ENCODE measurements at regions of chr18 and their contacts with region 1.

Region 1: DNA sequence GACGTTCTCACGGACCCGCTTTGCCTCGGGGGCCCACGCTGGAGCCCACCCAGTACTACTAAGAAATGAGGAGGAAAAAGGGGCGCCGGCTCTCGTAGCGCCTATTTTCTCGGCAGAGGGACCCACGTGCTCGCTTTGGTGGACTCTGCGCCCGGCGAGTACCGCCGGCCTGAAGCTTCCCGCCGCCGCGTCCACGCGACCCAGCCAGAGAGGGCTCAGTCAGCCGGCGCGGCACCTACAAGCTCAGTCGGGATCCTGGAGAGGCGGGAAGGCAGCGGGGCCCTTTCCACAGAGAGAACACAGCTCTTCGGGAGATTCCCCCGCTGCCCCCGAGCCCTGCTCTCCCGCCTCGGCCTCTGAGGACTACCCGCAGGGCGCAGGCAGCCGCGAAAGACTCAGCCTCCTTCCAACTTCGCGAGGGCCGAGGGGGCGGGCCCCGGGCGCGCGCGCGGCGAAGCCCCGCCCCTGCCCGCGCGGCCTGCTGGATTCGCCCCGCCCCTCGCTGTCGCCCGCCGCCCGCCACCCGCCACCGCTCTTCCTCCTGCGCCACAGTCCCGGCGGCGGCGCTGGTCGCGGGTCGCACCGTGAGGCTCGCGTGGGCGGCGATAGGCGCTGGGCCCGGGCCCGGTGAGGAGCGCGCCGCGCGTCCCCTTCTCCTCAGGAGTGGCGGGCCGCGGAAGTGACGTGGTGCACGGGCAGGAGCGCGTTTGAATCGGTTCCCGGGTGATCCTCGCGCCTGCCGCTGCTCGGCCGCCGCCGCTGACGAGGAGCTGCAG is at the start of gene SMCHD1:
- DNase-seq: peak; percentile 67 to 96 (median 87)
- ATAC-seq: peak; percentile 70
- H3K4me3 ChIP-seq: peak within 1 kb of the TSS; percentile 96 to 97
- H3K4me3 Mint-ChIP-seq: peak within 1 kb of the TSS; percentile 88
- H3K27ac ChIP-seq: peak within 1 kb of the TSS; percentile 97 to 100
- H3K27ac Mint-ChIP-seq: peak within 1 kb of the TSS; percentile 98
- H3K4me1 ChIP-seq: peaks cover 29% of the 10 kb centered on the region
- H3K4me1 Mint-ChIP-seq: peaks cover 48% of the 10 kb centered on the region
- H3K27me3 ChIP-seq: no peaks in the 10 kb centered on the region
- H3K27me3 Mint-ChIP-seq: no peaks in the 10 kb centered on the region
- CTCF ChIP-seq: no peak
- total RNA-seq, gene SMCHD1: 305 to 306 TPM

Region 2: DNA sequence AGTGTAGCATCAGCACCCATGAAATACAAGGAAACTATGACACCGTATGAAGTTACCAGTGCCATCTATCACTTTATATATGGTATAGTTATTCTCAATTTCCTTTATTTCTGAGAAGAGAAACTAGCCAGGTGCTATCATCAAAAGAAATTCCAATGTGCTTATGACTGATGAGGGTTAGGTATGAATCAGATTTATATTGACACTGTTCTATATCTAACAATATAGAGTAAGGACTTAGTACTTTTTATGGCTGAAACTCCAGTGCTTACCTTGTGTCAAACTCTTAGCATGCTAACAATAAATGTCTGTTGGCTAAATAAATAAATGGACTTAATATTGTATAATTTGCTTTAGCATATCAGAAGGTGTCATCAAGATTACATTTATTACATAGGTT is 91.0 kb before region 1 on chr18:
- CTCF ChIA-PET with region 1: interaction called, 3 read pairs
- POLR2A ChIA-PET with region 1: interaction called, 10 read pairs
- intact Hi-C with region 1: no loop called
- DNase-seq: no peak
- ATAC-seq: no peak
- H3K4me3 ChIP-seq: no peak overlapping the region
- H3K4me3 Mint-ChIP-seq: no peak overlapping the region
- H3K27ac ChIP-seq: no peak overlapping the region
- H3K27ac Mint-ChIP-seq: no peak overlapping the region
- H3K4me1 ChIP-seq: peaks cover 10% of the 10 kb centered on the region
- H3K4me1 Mint-ChIP-seq: peaks cover 26% of the 10 kb centered on the region
- H3K27me3 ChIP-seq: no peaks in the 10 kb centered on the region
- H3K27me3 Mint-ChIP-seq: no peaks in the 10 kb centered on the region
- CTCF ChIP-seq: no peak

Region 3: DNA sequence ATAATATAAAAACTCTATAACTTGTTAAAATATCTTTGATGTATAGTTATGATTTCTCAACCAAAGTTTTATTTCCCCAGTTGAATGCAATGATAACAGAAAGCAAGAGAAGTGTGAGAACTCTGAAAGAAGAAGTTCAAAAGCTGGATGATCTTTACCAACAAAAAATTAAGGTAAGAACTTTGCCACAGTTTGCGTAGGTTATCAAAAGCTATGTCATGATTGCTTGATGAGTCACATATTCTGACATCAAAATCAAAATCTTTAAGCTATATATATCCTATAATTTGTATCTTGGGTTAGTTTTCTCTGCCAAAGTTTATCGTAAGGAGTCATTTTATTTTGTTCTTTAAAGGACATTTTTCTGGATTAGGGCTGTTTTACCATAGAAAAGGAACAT is 49.0 kb before region 1 on chr18:
- CTCF ChIA-PET with region 1: interaction called, 3 read pairs
- POLR2A ChIA-PET with region 1: interaction called, 41 read pairs
- intact Hi-C with region 1: loop called (anchors 1 to 5 kb)
- DNase-seq: peak in 2 of 9 experiments; percentile 38 to 70
- ATAC-seq: peak; percentile 56
- H3K4me3 ChIP-seq: no peak overlapping the region
- H3K4me3 Mint-ChIP-seq: peak overlapping the region; percentile 43
- H3K27ac ChIP-seq: peak overlapping the region; percentile 19 to 74
- H3K27ac Mint-ChIP-seq: peak overlapping the region; percentile 85
- H3K4me1 ChIP-seq: peaks cover 33% of the 10 kb centered on the region
- H3K4me1 Mint-ChIP-seq: peaks cover 54% of the 10 kb centered on the region
- H3K27me3 ChIP-seq: no peaks in the 10 kb centered on the region
- H3K27me3 Mint-ChIP-seq: no peaks in the 10 kb centered on the region
- CTCF ChIP-seq: no peak

Region 4: DNA sequence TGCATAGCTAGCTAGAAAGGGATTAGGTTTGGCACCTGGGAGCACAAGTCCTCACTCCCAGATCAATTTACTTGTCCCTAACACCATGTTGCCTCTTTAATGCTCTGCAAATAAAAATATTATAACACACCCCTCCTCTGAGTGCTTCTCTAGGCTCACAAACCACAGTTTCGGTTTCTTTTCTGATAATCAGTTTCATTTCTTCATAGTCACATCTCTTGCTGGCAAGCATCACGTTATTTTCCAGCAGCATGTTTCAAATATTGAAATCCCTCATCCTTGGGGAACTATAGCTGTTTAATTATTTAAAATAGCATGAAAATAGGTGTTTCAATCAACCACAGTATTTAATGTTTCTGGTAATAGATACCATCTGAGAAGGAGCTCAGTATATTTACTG is 13.7 kb before region 1 on chr18:
- CTCF ChIA-PET with region 1: interaction called, 20 read pairs
- POLR2A ChIA-PET with region 1: interaction called, 232 read pairs
- intact Hi-C with region 1: loop called (anchors 1 kb)
- DNase-seq: peak in 2 of 9 experiments; percentile 62 to 83
- ATAC-seq: peak; percentile 31
- H3K4me3 ChIP-seq: peak overlapping the region; percentile 22 to 29
- H3K4me3 Mint-ChIP-seq: peak overlapping the region; percentile 79
- H3K27ac ChIP-seq: peak overlapping the region; percentile 40 to 92
- H3K27ac Mint-ChIP-seq: peak overlapping the region; percentile 95
- H3K4me1 ChIP-seq: peaks cover 72% of the 10 kb centered on the region
- H3K4me1 Mint-ChIP-seq: peaks cover 48% of the 10 kb centered on the region
- H3K27me3 ChIP-seq: no peaks in the 10 kb centered on the region
- H3K27me3 Mint-ChIP-seq: no peaks in the 10 kb centered on the region
- CTCF ChIP-seq: no peak

Region 5: GRCh38 chr18:2687390-2688001 is 32.1 kb after region 1 on chr18:
- CTCF ChIA-PET with region 1: no interaction called
- POLR2A ChIA-PET with region 1: interaction called, 12 read pairs
- intact Hi-C with region 1: no loop called
- DNase-seq: no peak
- ATAC-seq: no peak
- H3K4me3 ChIP-seq: no peak overlapping the region
- H3K4me3 Mint-ChIP-seq: peak overlapping the region; percentile 38
- H3K27ac ChIP-seq: peak overlapping the region in 1 of 2 experiments; percentile 26
- H3K27ac Mint-ChIP-seq: peak overlapping the region; percentile 23
- H3K4me1 ChIP-seq: peaks cover 27% of the 10 kb centered on the region
- H3K4me1 Mint-ChIP-seq: peaks cover 64% of the 10 kb centered on the region
- H3K27me3 ChIP-seq: no peaks in the 10 kb centered on the region
- H3K27me3 Mint-ChIP-seq: no peaks in the 10 kb centered on the region
- CTCF ChIP-seq: no peak

Region 6: GRCh38 chr18:2758309-2758708 is 102.9 kb after region 1 on chr18:
- CTCF ChIA-PET with region 1: no interaction called
- POLR2A ChIA-PET with region 1: no interaction called
- intact Hi-C with region 1: no loop called
- DNase-seq: no peak
- ATAC-seq: no peak
- H3K4me3 ChIP-seq: no peak overlapping the region
- H3K4me3 Mint-ChIP-seq: no peak overlapping the region
- H3K27ac ChIP-seq: no peak overlapping the region
- H3K27ac Mint-ChIP-seq: peak overlapping the region; percentile 37
- H3K4me1 ChIP-seq: no peaks in the 10 kb centered on the region
- H3K4me1 Mint-ChIP-seq: peaks cover 26% of the 10 kb centered on the region
- H3K27me3 ChIP-seq: no peaks in the 10 kb centered on the region
- H3K27me3 Mint-ChIP-seq: no peaks in the 10 kb centered on the region
- CTCF ChIP-seq: no peak

Region 7: DNA sequence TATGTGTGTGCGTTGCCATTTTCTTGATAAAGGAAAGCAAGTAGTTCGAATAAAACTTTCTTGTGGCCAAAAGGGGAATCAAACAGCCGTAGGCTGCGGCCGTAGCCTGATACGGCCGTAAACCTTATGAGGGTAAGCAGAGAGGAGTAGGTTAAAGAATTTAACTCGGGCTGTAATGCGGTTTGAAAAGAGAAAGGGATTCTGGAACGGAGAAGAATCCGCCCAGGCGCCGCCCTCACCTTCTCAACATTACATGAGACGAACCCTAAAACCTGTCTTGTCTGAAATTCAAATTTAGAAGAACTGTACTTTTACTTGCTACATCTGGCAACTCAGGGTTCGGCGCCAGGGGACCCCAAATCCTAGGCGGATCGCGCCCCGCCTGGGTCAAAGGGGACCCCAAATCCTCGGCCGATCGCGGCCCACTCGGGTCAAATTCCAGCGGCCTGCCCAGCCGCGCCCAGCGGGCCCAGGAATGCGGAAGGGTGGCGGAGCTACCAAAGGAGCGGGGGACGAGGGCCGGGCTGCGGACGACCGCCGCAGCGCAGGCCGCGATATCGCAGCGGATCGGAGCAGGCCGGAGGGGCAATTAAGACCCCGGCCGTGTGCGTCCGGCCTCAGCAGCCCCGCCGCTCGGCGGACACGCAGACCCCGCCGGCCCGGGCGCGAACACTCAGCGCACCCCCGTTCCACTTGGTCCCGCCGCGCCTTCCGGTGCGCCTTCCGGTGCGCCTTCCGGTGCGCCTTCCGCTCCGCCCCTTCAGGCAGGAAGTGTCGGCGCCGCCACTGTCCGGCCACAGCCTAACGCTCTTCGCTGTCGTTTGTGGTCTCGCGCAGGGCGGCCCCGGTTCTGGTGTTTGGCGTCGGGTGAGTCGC is 606.2 kb after region 1 on chr18 and contains the start of gene MYL12B:
- CTCF ChIA-PET with region 1: no interaction called
- POLR2A ChIA-PET with region 1: interaction called, 5 read pairs
- intact Hi-C with region 1: loop called in 1 of 2 experiments (anchors 5 kb)
- DNase-seq: peak; percentile 58 to 92 (median 79)
- ATAC-seq: peak; percentile 69
- H3K4me3 ChIP-seq: peak within 1 kb of the TSS; percentile 72 to 80
- H3K4me3 Mint-ChIP-seq: peak within 1 kb of the TSS; percentile 90
- H3K27ac ChIP-seq: peak within 1 kb of the TSS; percentile 96 to 97
- H3K27ac Mint-ChIP-seq: peak within 1 kb of the TSS; percentile 100
- H3K4me1 ChIP-seq: peaks cover 52% of the 10 kb centered on the region
- H3K4me1 Mint-ChIP-seq: peaks cover 82% of the 10 kb centered on the region
- H3K27me3 ChIP-seq: no peaks in the 10 kb centered on the region
- H3K27me3 Mint-ChIP-seq: no peaks in the 10 kb centered on the region
- CTCF ChIP-seq: no peak
- total RNA-seq, gene MYL12B: 117 to 132 TPM

Measured in CD8-positive, alpha-beta T cell (primary cell).